Tibial artery (tissue), 4 donors: ENCODE measurements at regions of chrX and their contacts with region 1.

Region 1: DNA sequence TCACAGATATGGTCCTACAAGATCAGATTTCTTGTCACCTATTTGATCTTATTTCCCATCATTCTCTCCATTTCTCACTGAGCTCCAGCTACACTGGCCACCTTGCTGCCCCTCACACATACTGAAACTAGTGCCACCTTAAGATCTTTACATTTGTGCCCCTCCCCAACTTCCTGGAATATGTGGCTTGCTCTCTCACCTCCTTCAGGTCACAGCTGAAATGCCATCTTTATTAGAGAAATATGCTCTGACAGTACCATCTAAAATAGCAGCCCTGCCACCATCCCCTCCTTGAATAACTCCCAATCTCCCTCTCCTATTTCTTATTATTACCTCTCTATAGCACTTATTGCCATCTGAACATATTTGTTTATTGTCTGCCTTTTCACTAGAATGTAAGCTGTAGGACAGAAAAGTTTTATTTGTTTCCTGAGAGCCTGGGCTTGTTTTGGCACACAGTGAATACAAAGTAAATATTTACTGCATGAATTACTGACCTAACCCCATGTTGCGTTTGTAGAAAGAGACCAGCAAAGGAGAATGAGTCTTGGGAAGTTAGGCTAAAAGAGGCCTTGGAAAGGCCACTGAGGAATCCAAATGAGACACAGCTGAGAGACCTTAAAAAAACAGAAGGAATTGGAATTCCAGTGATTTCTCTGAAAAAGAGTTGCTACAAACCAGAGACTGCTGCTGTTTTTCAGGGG is 22.7 kb downstream of the DYNLT3 start:
- DNase-seq: no peak
- H3K4me3 ChIP-seq: no peak overlapping the region
- H3K27ac ChIP-seq: no peak overlapping the region
- H3K4me1 ChIP-seq: no peaks in the 10 kb centered on the region
- H3K27me3 ChIP-seq: no peaks in the 10 kb centered on the region
- CTCF ChIP-seq: no peak

Region 2: DNA sequence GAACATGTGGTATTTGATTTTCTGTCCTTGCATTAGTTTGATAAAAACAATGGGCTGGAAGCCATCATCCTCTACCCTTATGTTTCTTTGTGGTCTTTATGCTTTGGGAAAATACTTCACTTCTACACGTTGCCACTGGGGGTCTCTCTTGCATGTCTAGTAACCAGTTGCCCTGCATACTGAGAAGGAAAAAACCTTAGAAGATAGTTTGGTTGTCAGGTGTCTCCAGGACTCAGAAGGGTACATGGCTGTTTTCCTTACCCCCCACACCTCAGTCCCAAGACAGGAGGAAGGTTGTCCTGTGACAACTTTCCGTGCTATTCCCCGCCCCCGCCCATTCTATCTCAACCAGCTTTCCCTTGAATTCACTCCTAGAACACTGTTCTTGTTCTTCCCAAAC is 315.3 kb before region 1 on chrX:
- intact Hi-C with region 1: loop called (anchors 5 kb)
- DNase-seq: no peak
- H3K4me3 ChIP-seq: no peak overlapping the region
- H3K27ac ChIP-seq: no peak overlapping the region
- H3K4me1 ChIP-seq: no peaks in the 10 kb centered on the region
- H3K27me3 ChIP-seq: no peaks in the 10 kb centered on the region
- CTCF ChIP-seq: peak; percentile 37 to 43

Region 3: GRCh38 chrX:37765507-37765906 is 59.1 kb before region 1 on chrX:
- intact Hi-C with region 1: no loop called
- DNase-seq: no peak
- H3K4me3 ChIP-seq: no peak overlapping the region
- H3K27ac ChIP-seq: no peak overlapping the region
- H3K4me1 ChIP-seq: no peaks in the 10 kb centered on the region
- H3K27me3 ChIP-seq: no peaks in the 10 kb centered on the region
- CTCF ChIP-seq: no peak